Tibial artery (tissue), 4 donors: ENCODE measurements at regions of chr1 and their contacts with region 1.

Region 1: GRCh38 chr1:109643385-109644230 is 12.3 kb upstream of the GSTM4 start:
- DNase-seq: peak; percentile 74 to 87
- H3K4me3 ChIP-seq: no peak overlapping the region
- H3K27ac ChIP-seq: no peak overlapping the region
- H3K4me1 ChIP-seq: peaks cover 0 to 9% (median 6%) of the 10 kb centered on the region in 4 donors
- H3K27me3 ChIP-seq: no peaks in the 10 kb centered on the region
- CTCF ChIP-seq: peak; percentile 83 to 86

Region 2: DNA sequence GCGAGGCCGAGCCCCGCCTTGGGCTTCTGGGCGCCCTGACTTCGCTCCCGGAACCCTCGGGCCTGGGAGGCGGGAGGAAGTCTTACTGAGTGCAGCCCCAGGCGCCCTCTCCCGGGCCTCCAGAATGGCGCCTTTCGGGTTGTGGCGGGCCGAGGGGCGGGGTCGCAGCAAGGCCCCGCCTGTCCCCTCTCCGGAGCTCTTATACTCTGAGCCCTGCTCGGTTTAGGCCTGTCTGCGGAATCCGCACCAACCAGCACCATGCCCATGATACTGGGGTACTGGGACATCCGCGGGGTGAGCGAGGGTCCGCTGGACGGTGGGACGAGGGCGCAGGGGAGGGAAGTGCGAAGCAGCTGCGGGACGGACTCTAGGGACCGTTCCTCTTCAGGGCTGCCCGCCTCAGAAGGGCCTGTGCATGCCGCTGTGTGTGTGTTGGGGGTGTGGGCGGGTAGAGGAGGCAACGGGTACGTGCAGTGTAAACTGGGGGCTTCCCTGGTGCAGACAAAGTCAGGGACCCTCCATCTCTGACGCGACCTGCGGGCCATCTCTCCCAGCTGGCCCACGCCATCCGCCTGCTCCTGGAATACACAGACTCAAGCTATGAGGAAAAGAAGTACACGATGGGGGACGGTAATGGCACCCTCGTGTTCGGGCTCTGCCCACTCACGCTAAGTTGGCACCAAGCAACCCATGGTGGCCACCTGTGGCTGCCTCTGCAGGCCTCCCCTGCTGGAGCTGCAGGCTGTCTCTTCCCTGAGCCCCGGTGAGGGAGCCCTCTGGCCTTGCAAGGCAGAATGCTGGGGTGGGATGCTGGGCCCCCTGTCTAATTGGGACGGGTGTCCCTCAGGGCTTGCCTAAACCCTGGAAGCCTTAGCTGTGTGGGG is 44.2 kb after region 1 on chr1 and contains the start of gene GSTM1:
- intact Hi-C with region 1: loop called (anchors 5 kb)
- DNase-seq: no peak
- H3K4me3 ChIP-seq: no peak within 1 kb of the TSS
- H3K27ac ChIP-seq: no peak within 1 kb of the TSS
- H3K4me1 ChIP-seq: no peaks in the 10 kb centered on the region
- H3K27me3 ChIP-seq: no peaks in the 10 kb centered on the region
- CTCF ChIP-seq: no peak